Activated T-helper 2 cell treated with anti-CD3 and anti-CD28 coated beads, Interferon-gamma antibody, Interleukin-2, Interleukin-4, amounts not matched to agents 10 μg/mL and 5 μg/mL and 100 μg/mL, durations not matched to agents 14 hours and 24 hours and 36 hours (primary cell): ENCODE measurements at regions of chr6 and their contacts with region 1.

Region 1: DNA sequence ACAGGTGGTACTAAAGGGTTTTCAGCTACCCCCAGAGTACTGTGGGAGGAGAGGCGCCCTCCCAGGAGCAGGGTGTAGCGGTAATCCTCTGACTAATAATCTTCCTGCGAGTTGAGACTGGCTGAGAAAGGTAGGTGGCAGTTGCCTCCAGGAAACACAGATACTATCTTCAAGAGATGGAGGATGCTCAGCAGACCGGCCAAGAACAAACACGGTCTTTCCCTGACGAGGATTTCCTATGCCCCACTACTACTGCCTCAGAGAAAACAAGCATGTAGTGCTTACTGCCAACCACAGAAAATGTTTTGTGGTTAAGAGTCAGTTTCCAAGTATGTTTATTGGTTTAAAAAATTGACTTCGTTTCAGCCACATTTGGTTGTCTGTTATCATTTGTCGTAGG is 26.8 kb downstream of the C6orf89 start:
- DNase-seq: peak; percentile 78
- H3K4me3 Mint-ChIP-seq: peak overlapping the region; percentile 71
- H3K27ac Mint-ChIP-seq: peak overlapping the region; percentile 80
- H3K4me1 Mint-ChIP-seq: peaks cover 51% of the 10 kb centered on the region
- H3K27me3 Mint-ChIP-seq: no peaks in the 10 kb centered on the region

Region 2: DNA sequence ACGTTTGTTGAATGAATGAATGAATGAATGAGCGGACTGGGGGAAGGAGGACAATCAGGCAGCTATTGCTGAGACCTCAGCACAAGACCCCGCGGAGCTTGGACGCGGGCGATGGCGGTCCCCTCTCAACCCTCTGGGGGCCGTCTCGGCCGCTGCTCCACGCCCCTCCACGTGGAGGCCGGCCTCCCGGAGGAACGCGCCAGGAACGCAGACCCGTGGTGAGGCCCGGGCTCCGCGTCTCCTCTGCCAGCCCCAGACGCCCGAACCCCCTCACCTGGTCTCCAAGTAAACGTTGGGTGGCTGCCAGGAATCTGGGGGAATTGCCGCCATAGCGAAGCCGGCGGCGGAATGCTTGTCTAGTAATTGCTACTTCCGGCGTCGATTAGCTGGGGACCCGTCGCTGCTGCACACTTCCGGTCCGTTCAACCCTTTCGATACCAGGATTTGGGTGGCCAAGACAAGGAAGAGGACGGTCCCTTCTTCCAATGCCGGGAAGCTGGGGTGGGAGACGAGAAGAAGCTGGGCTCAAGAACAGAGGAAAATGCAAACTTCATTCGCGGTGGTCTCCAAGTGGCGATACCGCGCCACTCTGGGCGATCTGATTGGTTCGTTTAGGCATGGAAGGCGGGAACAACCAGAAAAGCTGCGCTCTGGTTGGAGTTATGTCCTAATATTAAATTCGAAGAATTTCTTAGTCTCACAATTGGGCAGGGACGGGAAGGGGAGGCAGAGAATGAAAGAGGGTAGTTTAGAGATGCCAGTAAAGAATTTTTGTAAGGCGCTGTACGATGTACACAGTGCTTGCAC is 37.9 kb before region 1 on chr6 and contains the start of gene PPIL1:
- intact Hi-C with region 1: loop called (anchors 2 kb)
- DNase-seq: peak; percentile 80
- H3K4me3 Mint-ChIP-seq: peak within 1 kb of the TSS; percentile 99
- H3K27ac Mint-ChIP-seq: peak within 1 kb of the TSS; percentile 100
- H3K4me1 Mint-ChIP-seq: peaks cover 48% of the 10 kb centered on the region
- H3K27me3 Mint-ChIP-seq: peaks cover 3% of the 10 kb centered on the region
- total RNA-seq, gene PPIL1: 52.4 and 54.8 TPM in 2 replicates

Region 3: GRCh38 chr6:36925809-36926208 is 13.2 kb after region 1 on chr6:
- intact Hi-C with region 1: loop called (anchors 1 kb)
- DNase-seq: no peak
- H3K4me3 Mint-ChIP-seq: no peak overlapping the region
- H3K27ac Mint-ChIP-seq: peak overlapping the region; percentile 75
- H3K4me1 Mint-ChIP-seq: peaks cover 33% of the 10 kb centered on the region
- H3K27me3 Mint-ChIP-seq: no peaks in the 10 kb centered on the region

Region 4: DNA sequence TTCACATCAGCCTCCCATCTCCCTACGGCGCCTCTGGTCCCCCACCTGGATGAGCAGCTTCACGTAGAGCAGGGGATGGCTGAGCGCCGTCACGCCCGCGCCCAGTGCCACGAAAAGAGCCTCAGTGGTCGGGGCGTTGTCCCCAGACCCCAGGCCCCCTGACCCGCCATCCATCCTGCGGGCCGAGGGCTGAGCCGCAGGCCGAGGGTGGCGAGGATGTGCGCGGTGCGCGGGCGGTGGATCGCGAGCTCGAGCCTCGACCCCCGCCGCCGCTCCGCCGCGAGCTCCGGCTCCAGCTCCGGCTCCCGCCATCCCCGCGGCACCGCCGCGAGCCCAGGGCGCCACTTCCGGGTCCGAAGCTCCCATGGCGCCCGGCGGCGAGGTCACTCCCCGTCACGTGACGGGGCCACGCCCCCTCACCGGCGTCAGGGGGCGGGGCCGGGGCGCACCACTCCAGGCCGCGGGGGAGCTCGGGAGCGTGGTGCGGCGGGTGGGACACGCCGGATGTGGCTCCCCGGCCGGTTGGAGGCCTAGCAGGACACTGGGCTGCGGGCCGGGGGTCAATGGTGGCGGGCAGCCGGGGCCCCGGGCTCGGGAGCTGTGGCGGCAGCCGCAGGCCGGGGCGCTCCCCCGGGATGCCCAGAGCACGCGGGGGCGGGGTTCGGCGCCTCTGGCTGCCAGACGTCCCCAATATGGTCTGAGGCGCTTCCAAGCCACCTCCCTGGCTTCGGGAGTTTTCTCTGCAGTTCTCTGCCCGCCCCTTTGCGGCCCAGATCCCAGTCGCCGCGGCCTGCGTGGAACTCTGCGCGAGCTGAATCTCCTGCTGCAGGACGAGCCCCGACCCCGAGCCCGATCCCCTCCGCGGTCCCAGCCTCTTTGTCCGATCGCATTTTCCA is 73.5 kb after region 1 on chr6 and contains the start of gene MTCH1:
- intact Hi-C with region 1: loop called (anchors 1 kb)
- DNase-seq: peak; percentile 86
- H3K4me3 Mint-ChIP-seq: peak within 1 kb of the TSS; percentile 98
- H3K27ac Mint-ChIP-seq: peak within 1 kb of the TSS; percentile 96
- H3K4me1 Mint-ChIP-seq: peaks cover 16% of the 10 kb centered on the region
- H3K27me3 Mint-ChIP-seq: peaks cover 7% of the 10 kb centered on the region
- total RNA-seq, gene MTCH1: 117 and 119 TPM in 2 replicates

Region 5: GRCh38 chr6:37169496-37170272 is 257.1 kb after region 1 on chr6 and contains the start of gene PIM1:
- intact Hi-C with region 1: loop called (anchors 5 kb)
- DNase-seq: peak; percentile 93
- H3K4me3 Mint-ChIP-seq: peak within 1 kb of the TSS; percentile 94
- H3K27ac Mint-ChIP-seq: peak within 1 kb of the TSS; percentile 95
- H3K4me1 Mint-ChIP-seq: peaks cover 35% of the 10 kb centered on the region
- H3K27me3 Mint-ChIP-seq: no peaks in the 10 kb centered on the region
- total RNA-seq, gene PIM1: 151 and 161 TPM in 2 replicates

Region 6: GRCh38 chr6:37239950-37240713 is 327.5 kb after region 1 on chr6:
- intact Hi-C with region 1: loop called (anchors 1 kb)
- DNase-seq: peak; percentile 27
- H3K4me3 Mint-ChIP-seq: no peak overlapping the region
- H3K27ac Mint-ChIP-seq: peak overlapping the region; percentile 86
- H3K4me1 Mint-ChIP-seq: peaks cover 41% of the 10 kb centered on the region
- H3K27me3 Mint-ChIP-seq: no peaks in the 10 kb centered on the region

Region 7: DNA sequence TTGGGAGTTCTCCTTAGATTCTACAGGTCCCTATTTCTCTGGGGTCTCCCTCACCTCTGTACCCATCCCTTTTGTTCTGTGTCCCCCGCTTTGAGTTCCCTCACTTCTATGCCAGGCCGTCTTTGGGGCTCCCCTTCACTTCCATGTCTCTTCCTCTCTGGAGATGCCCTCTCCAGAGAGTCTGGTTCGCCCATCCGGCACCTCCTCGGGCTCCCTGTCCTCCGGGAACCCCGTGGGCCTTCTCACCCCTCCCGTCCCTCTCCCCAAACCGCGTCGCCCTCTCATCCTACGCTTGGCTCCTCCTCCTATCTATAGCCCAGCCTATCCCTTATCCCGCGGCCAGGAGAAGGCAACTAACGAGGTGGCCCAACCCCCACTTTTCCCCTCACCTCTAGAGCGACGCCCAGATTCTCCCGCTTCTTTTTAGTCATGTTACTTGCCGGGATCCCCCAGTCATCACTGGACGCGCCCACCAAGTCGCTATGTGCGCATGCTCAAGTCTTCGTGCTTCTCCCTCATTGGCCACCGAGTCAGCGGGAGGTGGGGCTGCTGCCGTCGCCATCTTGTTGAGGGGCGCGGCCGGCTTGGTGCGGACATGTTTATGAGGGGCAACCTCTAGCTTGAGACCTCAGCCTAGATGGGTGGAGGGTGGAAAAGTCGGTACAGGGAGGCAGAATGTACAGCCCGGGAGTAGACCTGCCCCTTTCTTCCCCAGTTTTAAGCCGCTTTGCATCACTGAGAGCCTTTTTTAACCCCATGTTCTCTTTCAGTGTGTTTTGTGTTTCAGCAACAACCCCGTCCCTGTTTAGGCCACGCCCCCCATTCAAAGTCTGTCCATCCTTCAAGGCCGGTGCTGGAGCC is 587.1 kb after region 1 on chr6 and contains the start of gene CCDC167:
- intact Hi-C with region 1: loop called (anchors 5 kb)
- DNase-seq: peak; percentile 96
- H3K4me3 Mint-ChIP-seq: peak within 1 kb of the TSS; percentile 93
- H3K27ac Mint-ChIP-seq: peak within 1 kb of the TSS; percentile 96
- H3K4me1 Mint-ChIP-seq: peaks cover 64% of the 10 kb centered on the region
- H3K27me3 Mint-ChIP-seq: no peaks in the 10 kb centered on the region
- total RNA-seq, gene CCDC167: 69.8 and 76.9 TPM in 2 replicates